Mucosa of descending colon (tissue), 3 donors: ENCODE measurements at regions of chr4 and their contacts with region 1.

Region 1: DNA sequence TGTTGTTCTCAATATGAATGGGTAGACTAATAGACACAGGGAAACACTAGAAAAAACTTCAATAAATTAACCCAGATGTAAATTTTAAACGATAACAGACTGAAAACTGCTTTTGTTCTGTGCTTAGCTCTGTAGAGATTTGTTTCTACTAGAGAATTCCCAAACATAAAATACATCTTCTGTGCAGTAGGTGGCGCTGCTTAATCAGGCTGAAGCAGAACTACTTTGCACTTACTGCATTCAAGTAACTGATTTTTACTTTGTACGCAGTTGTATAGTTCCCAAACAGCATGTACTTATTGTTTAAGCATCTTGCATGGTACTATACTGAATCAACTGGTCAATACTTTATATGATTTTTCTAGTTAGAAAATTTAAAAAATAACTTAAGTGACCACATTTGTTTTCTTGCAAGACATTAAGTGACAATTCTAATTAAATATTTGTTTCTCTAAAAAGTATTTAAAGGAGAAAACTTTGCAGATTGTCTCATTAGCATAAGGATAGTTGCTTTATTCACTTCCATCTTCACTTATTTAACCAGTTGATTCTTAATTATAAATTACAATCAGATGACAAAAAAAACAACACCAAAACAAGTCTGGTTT is 490.6 kb downstream of the IL15 start:
- DNase-seq: peak in 1 of 3 donors; percentile 86
- ATAC-seq: peak; percentile 64
- H3K4me3 ChIP-seq: no peak overlapping the region
- H3K4me1 ChIP-seq: peaks cover 15% of the 10 kb centered on the region
- CTCF ChIP-seq: peak; percentile 60

Region 2: DNA sequence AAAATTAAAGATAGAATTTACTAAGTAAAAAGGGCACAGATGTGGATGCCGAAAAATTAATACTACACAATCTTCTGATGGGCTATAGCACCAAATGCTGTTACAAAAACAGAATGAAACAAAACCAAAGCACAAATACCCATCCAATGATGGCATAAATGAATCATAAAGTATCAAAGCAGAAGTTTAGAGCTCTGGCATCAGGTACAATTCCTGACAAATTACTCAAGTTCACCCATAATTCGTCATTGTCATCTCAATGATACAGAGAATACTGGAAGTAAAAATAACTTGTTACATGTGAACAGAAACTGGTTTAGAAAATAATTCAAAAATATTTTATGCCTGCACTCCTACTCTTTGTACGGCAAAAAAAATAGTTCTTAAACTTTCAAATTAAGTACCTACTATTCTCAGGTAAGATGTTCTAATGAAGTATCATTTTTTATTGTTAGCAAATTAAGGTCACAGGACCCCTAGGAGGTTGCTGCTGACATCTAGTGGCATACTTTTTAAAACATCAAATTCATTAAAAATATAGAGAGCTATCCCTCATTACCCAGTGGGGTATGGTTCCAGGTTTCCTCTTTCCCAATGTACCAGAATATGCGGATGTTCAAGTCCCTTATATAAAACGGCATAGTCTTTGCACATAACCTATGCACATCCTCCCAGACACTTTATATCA is 593.0 kb after region 1 on chr4:
- intact Hi-C with region 1: loop called in 1 of 2 experiments (anchors 10 kb)
- DNase-seq: peak in 1 of 3 donors; percentile 10
- ATAC-seq: no peak
- H3K4me3 ChIP-seq: no peak overlapping the region
- H3K4me1 ChIP-seq: no peaks in the 10 kb centered on the region
- CTCF ChIP-seq: no peak

Region 3: DNA sequence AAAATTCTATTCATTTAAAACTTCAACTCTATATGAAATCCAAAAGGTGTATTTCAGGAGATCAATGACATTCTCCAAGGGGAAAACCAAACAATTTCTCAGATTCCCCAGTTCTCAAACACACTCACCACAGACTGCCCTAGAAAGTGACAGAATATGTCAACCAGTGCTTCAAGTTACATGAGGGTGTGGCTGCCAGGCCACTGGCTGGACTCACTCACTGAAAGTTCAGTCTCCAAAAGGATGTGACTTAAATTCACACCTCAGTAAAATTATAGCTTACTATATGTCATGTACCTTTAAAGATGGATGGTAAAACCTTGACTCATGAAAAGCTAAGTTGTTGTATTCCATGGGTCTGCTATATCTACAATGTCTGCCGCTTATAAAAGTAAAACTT is 711.8 kb after region 1 on chr4:
- intact Hi-C with region 1: loop called (anchors 2 to 10 kb)
- DNase-seq: no peak
- ATAC-seq: no peak
- H3K4me3 ChIP-seq: no peak overlapping the region
- H3K4me1 ChIP-seq: no peaks in the 10 kb centered on the region
- CTCF ChIP-seq: no peak

Region 4: GRCh38 chr4:142846729-142847596 is 720.0 kb after region 1 on chr4:
- intact Hi-C with region 1: loop called in 1 of 2 experiments (anchors 10 kb)
- DNase-seq: peak; percentile 53 to 79 (median 79)
- ATAC-seq: peak; percentile 82
- H3K4me3 ChIP-seq: peak overlapping the region; percentile 15
- H3K4me1 ChIP-seq: peaks cover 6% of the 10 kb centered on the region
- CTCF ChIP-seq: peak; percentile 36